T-cell (primary cell): ENCODE measurements at regions of chr3 and their contacts with region 1.

Region 1: GRCh38 chr3:55416351-55416821 is 70.7 kb downstream of the WNT5A start:
- DNase-seq: no peak
- ATAC-seq: no peak
- H3K4me3 ChIP-seq: no peak overlapping the region
- H3K4me3 Mint-ChIP-seq: no peak overlapping the region
- H3K27ac ChIP-seq: no peak overlapping the region
- H3K27ac Mint-ChIP-seq: no peak overlapping the region
- H3K4me1 ChIP-seq: no peaks in the 10 kb centered on the region
- H3K4me1 Mint-ChIP-seq: no peaks in the 10 kb centered on the region
- H3K27me3 ChIP-seq: no peaks in the 10 kb centered on the region
- H3K27me3 Mint-ChIP-seq: no peaks in the 10 kb centered on the region

Region 2: DNA sequence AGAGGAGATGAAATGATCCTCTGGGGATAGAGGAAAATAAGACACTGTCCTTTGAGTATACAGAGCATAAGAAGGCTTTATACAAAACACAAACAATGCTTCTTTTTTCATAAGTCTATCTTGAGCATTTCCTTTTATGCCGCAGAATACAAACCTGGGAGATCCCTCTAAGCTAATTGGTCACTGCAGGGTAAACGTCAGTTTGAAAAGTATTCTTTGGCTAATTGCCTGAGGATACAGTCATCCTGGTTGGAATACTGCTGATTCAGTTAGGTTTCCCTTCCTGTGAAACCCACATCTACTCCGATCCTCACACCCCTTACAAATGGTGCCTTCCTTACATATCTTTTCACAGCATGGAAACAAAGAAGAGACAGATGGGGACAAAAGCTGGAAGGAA is 60.1 kb after region 1 on chr3:
- CTCF ChIA-PET with region 1: no interaction called
- POLR2A ChIA-PET with region 1: interaction called in 1 of 2 experiments, 13 read pairs
- DNase-seq: no peak
- ATAC-seq: no peak
- H3K4me3 ChIP-seq: no peak overlapping the region
- H3K4me3 Mint-ChIP-seq: no peak overlapping the region
- H3K27ac ChIP-seq: no peak overlapping the region
- H3K27ac Mint-ChIP-seq: no peak overlapping the region
- H3K4me1 ChIP-seq: no peaks in the 10 kb centered on the region
- H3K4me1 Mint-ChIP-seq: no peaks in the 10 kb centered on the region
- H3K27me3 ChIP-seq: peaks cover 9 to 13% of the 10 kb centered on the region in 2 experiments
- H3K27me3 Mint-ChIP-seq: peaks cover 35 to 45% of the 10 kb centered on the region in 2 donors